ENCODE measurements at regions of chr13 and their contacts with region 1.

Region 1: GRCh38 chr13:31424117-31424729 is 224.4 kb downstream of the B3GLCT start:
- DNase-seq: peak; percentile 78
- ATAC-seq: peak; percentile 88
- H3K4me3 Mint-ChIP-seq: no peak overlapping the region
- H3K27ac Mint-ChIP-seq: no peak overlapping the region
- H3K4me1 Mint-ChIP-seq: peaks cover 2% of the 10 kb centered on the region
- H3K27me3 Mint-ChIP-seq: peaks cover 3% of the 10 kb centered on the region
- CTCF ChIP-seq: peak; percentile 87

Region 2: DNA sequence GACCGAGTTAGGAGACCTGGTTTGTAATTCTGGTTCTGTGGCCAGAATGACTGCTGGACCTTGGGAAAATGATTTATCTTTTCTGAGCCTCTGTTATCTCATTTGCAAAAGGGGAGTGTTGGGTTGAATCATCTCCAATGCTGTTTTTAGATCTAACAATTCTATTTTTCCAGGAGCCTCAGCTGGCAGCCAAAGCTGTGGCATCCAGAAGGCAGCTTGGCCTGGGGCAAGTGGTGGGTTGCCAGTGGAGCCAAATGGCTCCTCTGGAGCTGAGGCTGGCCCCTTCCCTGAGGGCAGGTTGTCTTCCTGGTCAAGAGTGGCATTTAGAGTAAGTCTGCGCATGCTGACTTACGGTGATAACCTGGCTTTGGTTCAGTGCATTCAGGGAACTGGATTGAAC is 203.2 kb before region 1 on chr13:
- CTCF ChIA-PET with region 1: interaction called, 11 read pairs
- POLR2A ChIA-PET with region 1: no interaction called
- intact Hi-C with region 1: no loop called
- DNase-seq: no peak
- ATAC-seq: no peak
- H3K4me3 Mint-ChIP-seq: no peak overlapping the region
- H3K27ac Mint-ChIP-seq: no peak overlapping the region
- H3K4me1 Mint-ChIP-seq: no peaks in the 10 kb centered on the region
- H3K27me3 Mint-ChIP-seq: no peaks in the 10 kb centered on the region
- CTCF ChIP-seq: no peak

Region 3: GRCh38 chr13:31413516-31413915 is 10.7 kb before region 1 on chr13:
- CTCF ChIA-PET with region 1: interaction called, 10 read pairs
- POLR2A ChIA-PET with region 1: no interaction called
- intact Hi-C with region 1: no loop called
- DNase-seq: no peak
- ATAC-seq: no peak
- H3K4me3 Mint-ChIP-seq: no peak overlapping the region
- H3K27ac Mint-ChIP-seq: no peak overlapping the region
- H3K4me1 Mint-ChIP-seq: no peaks in the 10 kb centered on the region
- H3K27me3 Mint-ChIP-seq: peaks cover 3% of the 10 kb centered on the region
- CTCF ChIP-seq: no peak

Region 4: GRCh38 chr13:31504918-31505317 is 80.7 kb after region 1 on chr13:
- CTCF ChIA-PET with region 1: no interaction called
- POLR2A ChIA-PET with region 1: no interaction called
- intact Hi-C with region 1: no loop called
- DNase-seq: no peak
- ATAC-seq: no peak
- H3K4me3 Mint-ChIP-seq: no peak overlapping the region
- H3K27ac Mint-ChIP-seq: no peak overlapping the region
- H3K4me1 Mint-ChIP-seq: no peaks in the 10 kb centered on the region
- H3K27me3 Mint-ChIP-seq: no peaks in the 10 kb centered on the region
- CTCF ChIP-seq: no peak

Measured in activated CD8-positive, alpha-beta T cell treated with anti-CD3 and anti-CD28 coated beads for 36 hours (primary cell).